ENCODE measurements at regions of chr22 and their contacts with region 1.

Region 1: GRCh38 chr22:19970479-19971275 is 29.1 kb upstream of the TXNRD2 start:
- DNase-seq: peak in 1 of 2 experiments; percentile 96
- H3K4me3 ChIP-seq: no peak overlapping the region
- H3K27ac ChIP-seq: no peak overlapping the region
- H3K4me1 ChIP-seq: peaks cover 3 to 11% (median 10%) of the 10 kb centered on the region in 4 experiments; a peak in 6 of 7 replicates
- H3K27me3 ChIP-seq: no peaks in the 10 kb centered on the region
- CTCF ChIP-seq: peak; percentile 89 to 99 (median 93)
- EP300 ChIP-seq: no peak
- POLR2A ChIP-seq: no peak
- RAD21 ChIP-seq: peak; percentile 92 to 93

Region 2: GRCh38 chr22:19811811-19812771 is 158.6 kb before region 1 on chr22:
- CTCF ChIA-PET with region 1: no interaction called
- POLR2A ChIA-PET with region 1: no interaction called
- DNase-seq: peak in 1 of 2 experiments; percentile 39
- H3K4me3 ChIP-seq: no peak overlapping the region
- H3K27ac ChIP-seq: no peak overlapping the region
- H3K4me1 ChIP-seq: no peaks in the 10 kb centered on the region; a peak in 1 of 7 replicates
- H3K27me3 ChIP-seq: no peaks in the 10 kb centered on the region
- CTCF ChIP-seq: no peak
- EP300 ChIP-seq: no peak
- POLR2A ChIP-seq: no peak
- RAD21 ChIP-seq: no peak

Region 3: GRCh38 chr22:19981118-19981955 is 10.7 kb after region 1 on chr22:
- CTCF ChIA-PET with region 1: interaction called, 58 read pairs
- POLR2A ChIA-PET with region 1: interaction called, 13 read pairs
- DNase-seq: no peak
- H3K4me3 ChIP-seq: no peak overlapping the region
- H3K27ac ChIP-seq: no peak overlapping the region
- H3K4me1 ChIP-seq: peaks cover 0 to 8% (median 6%) of the 10 kb centered on the region in 4 experiments; a peak in 5 of 7 replicates
- H3K27me3 ChIP-seq: no peaks in the 10 kb centered on the region
- CTCF ChIP-seq: no peak
- EP300 ChIP-seq: no peak
- POLR2A ChIP-seq: no peak
- RAD21 ChIP-seq: no peak

Region 4: DNA sequence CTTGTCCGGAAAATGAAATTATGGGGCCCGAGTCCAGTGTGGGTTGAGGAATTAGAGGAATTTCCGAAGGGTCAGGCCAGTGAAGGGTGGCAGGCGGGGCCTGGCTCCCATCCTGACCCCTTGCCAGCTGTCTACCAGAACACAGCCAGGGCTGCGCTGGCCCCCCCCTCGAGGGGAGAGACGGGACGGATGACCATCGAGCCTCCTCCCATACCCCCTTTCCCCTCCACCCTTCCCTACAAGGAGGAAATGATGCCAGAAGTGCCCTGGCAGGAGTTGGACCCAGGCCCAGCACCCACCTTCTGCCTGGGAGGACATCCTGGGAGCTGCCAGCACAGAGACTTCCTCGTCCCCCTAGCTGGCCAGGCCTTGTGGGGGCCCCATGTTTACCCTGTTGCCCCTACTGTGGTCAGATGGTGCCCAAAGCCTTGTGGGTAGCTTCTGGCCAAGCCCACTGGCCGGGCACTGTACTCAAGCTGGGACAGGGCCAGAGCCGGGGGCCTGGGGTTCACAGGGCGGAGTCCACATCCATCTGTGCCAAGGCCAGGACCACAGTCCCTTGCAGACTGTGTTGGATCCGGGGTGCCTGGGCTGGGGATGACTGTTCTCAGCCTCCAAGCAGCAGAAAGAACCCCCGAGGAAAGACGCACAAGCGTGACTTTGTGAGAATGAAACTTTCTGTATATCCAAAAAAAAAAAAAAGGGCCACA is 25.1 kb after region 1 on chr22:
- CTCF ChIA-PET with region 1: interaction called, 10 read pairs
- POLR2A ChIA-PET with region 1: interaction called, 4 read pairs
- DNase-seq: no peak
- H3K4me3 ChIP-seq: no peak overlapping the region
- H3K27ac ChIP-seq: no peak overlapping the region
- H3K4me1 ChIP-seq: peaks cover 4 to 30% (median 18%) of the 10 kb centered on the region in 4 experiments
- H3K27me3 ChIP-seq: no peaks in the 10 kb centered on the region
- CTCF ChIP-seq: no peak
- EP300 ChIP-seq: no peak
- POLR2A ChIP-seq: no peak
- RAD21 ChIP-seq: no peak

Region 5: GRCh38 chr22:20027966-20028854 is 57.5 kb after region 1 on chr22:
- CTCF ChIA-PET with region 1: interaction called, 22 read pairs
- POLR2A ChIA-PET with region 1: interaction called, 3 read pairs
- DNase-seq: no peak
- H3K4me3 ChIP-seq: no peak overlapping the region
- H3K27ac ChIP-seq: no peak overlapping the region
- H3K4me1 ChIP-seq: no peaks in the 10 kb centered on the region; a peak in 1 of 7 replicates
- H3K27me3 ChIP-seq: no peaks in the 10 kb centered on the region
- CTCF ChIP-seq: peak in 1 of 3 experiments; percentile 17; a peak in 1 of 4 replicates
- EP300 ChIP-seq: no peak
- POLR2A ChIP-seq: no peak
- RAD21 ChIP-seq: peak in 1 of 2 experiments; percentile 11; a peak in 1 of 4 replicates

Region 6: DNA sequence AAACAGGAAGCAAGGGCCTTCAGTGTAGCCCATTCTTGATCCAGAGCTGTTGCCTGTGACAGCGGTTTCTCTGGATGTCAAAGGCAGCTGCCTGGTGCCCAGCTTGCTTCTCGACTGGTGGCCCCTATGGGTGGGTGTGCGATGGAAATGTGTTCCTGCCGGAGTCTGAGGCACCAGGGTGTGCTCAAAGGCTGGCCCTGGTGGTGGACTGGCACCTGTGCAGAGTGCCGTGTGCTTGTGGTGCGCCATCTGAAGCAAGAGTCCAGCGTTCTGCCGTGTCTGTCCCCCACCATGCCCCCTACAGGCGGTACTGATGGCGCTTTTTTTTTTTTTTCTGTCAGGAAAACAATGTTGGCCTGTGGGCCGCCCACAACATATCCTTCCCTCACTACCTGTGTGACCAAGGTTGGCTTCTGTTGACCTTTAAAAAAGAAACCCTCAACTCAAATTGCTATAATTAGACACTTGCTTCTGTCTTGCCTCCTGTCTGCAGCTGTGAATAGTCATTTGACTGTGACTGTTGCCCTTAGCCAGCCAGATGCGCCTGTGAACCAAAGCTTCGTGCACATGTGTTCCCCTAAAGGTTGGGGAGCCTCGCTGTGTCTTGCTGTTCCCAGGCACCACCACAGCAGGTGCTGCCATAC is 140.5 kb after region 1 on chr22:
- CTCF ChIA-PET with region 1: interaction called, 3 read pairs
- POLR2A ChIA-PET with region 1: interaction called, 10 read pairs
- DNase-seq: no peak
- H3K4me3 ChIP-seq: no peak overlapping the region
- H3K27ac ChIP-seq: no peak overlapping the region
- H3K4me1 ChIP-seq: no peaks in the 10 kb centered on the region
- H3K27me3 ChIP-seq: no peaks in the 10 kb centered on the region
- CTCF ChIP-seq: peak; percentile 48 to 60 (median 57)
- EP300 ChIP-seq: no peak
- POLR2A ChIP-seq: no peak; a peak in 1 of 3 replicates
- RAD21 ChIP-seq: no peak

Measured in H1 (cell line).